ENCODE measurements at regions of chr19 and their contacts with region 1.

Region 1: GRCh38 chr19:48363810-48364563 is at the starts of genes SYNGR4 and TMEM143:
- DNase-seq: peak; percentile 99
- H3K4me3 Mint-ChIP-seq: peak within 1 kb of the TSS; percentile 88
- H3K27ac Mint-ChIP-seq: peak within 1 kb of the TSS; percentile 94
- H3K4me1 Mint-ChIP-seq: peaks cover 14% of the 10 kb centered on the region
- H3K27me3 Mint-ChIP-seq: no peaks in the 10 kb centered on the region
- total RNA-seq, gene SYNGR4: 0.21 TPM in 1 of 2 experiments, not detected in the other
- total RNA-seq, gene TMEM143: 17.1 to 17.9 TPM

Region 2: DNA sequence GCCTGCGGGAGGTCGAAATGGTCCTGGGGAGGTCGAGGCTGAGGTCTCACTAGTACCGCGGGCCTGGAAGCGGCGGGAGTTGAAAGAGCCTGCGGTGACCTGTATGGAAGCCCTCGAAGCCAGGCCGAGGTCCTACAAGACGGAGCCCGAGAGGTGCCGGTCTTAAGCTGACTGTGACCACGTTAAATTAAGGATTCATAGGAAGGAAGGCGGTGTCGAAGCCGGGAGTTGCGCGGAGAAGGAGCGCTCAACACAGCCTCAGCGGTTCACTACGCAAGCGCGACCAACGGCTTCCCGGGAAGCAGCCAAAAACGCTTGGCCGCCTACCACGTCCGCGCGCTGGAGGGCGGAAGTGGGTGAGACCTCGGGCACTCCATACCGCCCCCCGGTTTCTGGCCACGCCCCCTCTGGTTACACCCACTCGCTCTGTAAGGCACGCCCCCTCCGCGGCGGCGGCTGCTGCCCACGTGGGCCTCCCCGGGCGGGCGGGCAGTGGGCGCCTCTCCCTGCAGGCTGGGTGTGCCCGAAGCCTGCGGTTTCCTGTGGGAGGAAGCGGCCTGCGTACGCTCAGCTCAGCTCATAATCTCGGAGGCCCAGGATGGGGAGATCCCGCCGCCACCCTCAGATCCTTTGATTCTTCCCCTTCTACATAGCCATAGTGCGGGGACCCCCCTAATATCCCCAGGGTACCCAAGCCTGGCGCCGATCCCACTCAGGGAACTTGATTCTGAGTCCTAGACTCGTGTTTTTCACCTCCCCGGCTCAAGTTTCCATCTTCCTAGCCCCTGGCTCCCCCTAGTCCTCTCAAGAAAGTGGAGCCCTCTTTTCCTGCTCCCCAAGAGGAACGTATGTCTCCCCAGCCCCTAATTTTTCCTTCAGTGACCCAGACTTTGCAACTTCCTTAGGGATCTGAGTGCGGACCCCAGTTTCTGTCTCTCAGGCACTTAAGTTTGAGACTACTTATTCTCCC is 42.1 kb before region 1 on chr19:
- CTCF ChIA-PET with region 1: interaction called, 6 read pairs
- POLR2A ChIA-PET with region 1: interaction called, 3 read pairs
- intact Hi-C with region 1: loop called (anchors 1 kb)
- DNase-seq: peak; percentile 99
- H3K4me3 Mint-ChIP-seq: peak overlapping the region; percentile 88
- H3K27ac Mint-ChIP-seq: peak overlapping the region; percentile 99
- H3K4me1 Mint-ChIP-seq: peaks cover 51% of the 10 kb centered on the region
- H3K27me3 Mint-ChIP-seq: no peaks in the 10 kb centered on the region

Region 3: DNA sequence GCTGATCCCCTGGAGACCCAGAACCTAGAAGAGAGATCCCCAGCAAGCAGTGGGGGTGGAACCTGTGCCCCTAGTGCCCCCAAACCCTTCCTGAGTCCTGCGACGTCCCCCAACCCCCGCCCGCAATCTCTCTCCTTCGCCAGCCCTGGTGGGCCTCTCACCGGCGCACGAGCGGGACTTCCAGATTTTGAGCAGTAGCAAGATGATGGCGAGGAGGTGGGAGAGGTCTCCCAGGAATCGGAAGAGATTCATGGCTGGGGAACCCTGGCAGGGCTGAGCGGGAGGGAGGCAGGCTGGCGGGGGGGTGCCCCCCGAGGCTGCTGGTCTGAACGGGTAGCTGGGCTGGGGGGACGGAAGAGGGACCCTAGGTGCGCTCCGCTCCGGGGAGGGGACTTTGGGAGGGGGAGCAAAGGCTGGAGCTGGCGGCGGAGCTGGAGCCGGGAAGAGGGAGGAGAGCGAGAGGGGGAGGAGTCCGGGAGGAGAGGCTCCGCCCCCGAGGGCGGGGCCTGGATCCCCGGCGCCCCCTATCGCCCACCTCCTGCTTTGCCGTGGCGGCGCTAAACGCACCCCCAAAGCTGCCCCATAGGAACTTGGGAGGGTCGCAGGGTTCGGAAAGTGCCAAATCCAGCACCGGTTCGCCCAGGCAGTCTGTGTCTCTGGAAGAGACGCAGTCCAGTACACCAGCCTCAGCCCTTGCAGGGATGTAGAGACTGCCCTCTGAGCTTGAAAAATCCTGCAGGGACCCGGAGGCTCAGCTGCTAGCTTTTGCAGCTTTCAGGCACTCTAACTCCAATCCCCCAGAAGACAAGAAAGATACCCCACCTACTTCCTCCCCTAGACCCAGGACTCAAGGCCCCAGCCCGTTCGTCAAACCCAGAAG is 27.4 kb after region 1 on chr19 and contains the start of gene KDELR1:
- CTCF ChIA-PET with region 1: interaction called, 29 read pairs
- POLR2A ChIA-PET with region 1: interaction called, 15 read pairs
- intact Hi-C with region 1: loop called (anchors 1 kb)
- DNase-seq: peak; percentile 80
- H3K4me3 Mint-ChIP-seq: peak within 1 kb of the TSS; percentile 90
- H3K27ac Mint-ChIP-seq: peak within 1 kb of the TSS; percentile 87
- H3K4me1 Mint-ChIP-seq: peaks cover 25% of the 10 kb centered on the region
- H3K27me3 Mint-ChIP-seq: peaks cover 23% of the 10 kb centered on the region
- total RNA-seq, gene KDELR1: 82.9 to 88.1 TPM

Region 4: DNA sequence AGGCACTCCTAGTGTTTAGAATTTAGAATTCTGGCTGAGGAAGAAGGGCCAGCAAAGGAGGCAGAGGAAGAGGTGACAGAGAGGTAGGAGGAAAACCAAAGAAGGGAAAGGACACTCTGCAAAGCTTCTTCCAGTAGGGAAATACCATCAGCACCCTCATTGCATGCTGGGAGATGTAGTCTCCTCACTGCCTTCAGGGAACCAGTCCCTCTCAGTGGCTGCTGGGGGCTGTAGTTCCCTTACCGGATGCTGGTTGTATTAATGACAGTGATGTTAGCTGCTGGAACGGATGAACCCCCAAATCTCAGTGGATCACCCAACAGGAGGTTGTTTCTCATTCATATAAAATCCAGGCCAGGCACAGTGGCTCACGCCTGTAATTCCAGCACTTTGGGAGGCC is 39.6 kb after region 1 on chr19:
- CTCF ChIA-PET with region 1: no interaction called
- POLR2A ChIA-PET with region 1: no interaction called
- intact Hi-C with region 1: no loop called
- DNase-seq: peak; percentile 65
- H3K4me3 Mint-ChIP-seq: no peak overlapping the region
- H3K27ac Mint-ChIP-seq: no peak overlapping the region
- H3K4me1 Mint-ChIP-seq: peaks cover 9% of the 10 kb centered on the region
- H3K27me3 Mint-ChIP-seq: peaks cover 3% of the 10 kb centered on the region

Region 5: GRCh38 chr19:48445606-48446481 is 81.9 kb after region 1 on chr19 and contains the start of gene GRWD1:
- CTCF ChIA-PET with region 1: interaction called, 3 read pairs
- POLR2A ChIA-PET with region 1: no interaction called
- intact Hi-C with region 1: loop called (anchors 1 kb)
- DNase-seq: peak; percentile 96
- H3K4me3 Mint-ChIP-seq: peak within 1 kb of the TSS; percentile 87
- H3K27ac Mint-ChIP-seq: peak within 1 kb of the TSS; percentile 93
- H3K4me1 Mint-ChIP-seq: peaks cover 28% of the 10 kb centered on the region
- H3K27me3 Mint-ChIP-seq: peaks cover 18% of the 10 kb centered on the region
- total RNA-seq, gene GRWD1: 38.8 to 45.3 TPM

Region 6: DNA sequence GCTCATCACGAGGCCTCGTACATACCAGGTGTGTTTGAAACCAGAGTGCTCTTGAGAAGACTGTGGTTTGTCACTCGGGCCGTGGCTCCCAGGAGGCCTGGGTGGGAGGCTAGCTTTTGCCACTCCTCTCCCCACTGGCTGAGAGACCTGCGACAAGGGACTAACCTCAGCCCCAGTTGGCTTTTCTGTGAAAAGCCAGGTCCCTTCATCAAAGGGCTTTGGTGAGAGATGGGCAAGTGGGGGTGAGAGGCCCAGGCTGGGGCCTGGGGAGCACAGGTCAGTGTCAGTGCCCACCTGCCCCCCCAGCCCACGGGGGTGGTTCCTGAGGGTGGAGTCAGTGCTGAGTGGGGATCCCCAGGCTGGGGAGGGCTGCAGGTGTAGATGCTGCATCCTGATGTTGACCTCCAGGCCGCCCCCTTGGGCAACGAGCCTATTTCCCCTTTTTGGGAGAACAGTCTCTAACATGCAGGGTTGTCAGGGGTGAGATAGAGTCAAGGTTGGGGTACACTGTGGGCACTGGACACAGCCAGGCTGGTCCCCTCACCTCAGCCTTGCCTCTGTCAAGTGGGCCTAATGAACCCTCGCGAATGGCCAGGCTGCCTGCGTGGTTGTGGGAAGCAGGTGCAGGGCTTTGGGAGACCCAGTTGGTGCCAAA is 92.0 kb after region 1 on chr19:
- CTCF ChIA-PET with region 1: no interaction called
- POLR2A ChIA-PET with region 1: no interaction called
- intact Hi-C with region 1: no loop called
- DNase-seq: no peak
- H3K4me3 Mint-ChIP-seq: no peak overlapping the region
- H3K27ac Mint-ChIP-seq: no peak overlapping the region
- H3K4me1 Mint-ChIP-seq: peaks cover 7% of the 10 kb centered on the region
- H3K27me3 Mint-ChIP-seq: no peaks in the 10 kb centered on the region

Region 7: GRCh38 chr19:48618916-48619691 is 255.1 kb after region 1 on chr19 and contains the starts of genes RPL18 and SPHK2:
- CTCF ChIA-PET with region 1: no interaction called
- POLR2A ChIA-PET with region 1: interaction called, 5 read pairs
- intact Hi-C with region 1: loop called (anchors 1 kb)
- DNase-seq: peak; percentile 97
- H3K4me3 Mint-ChIP-seq: peak within 1 kb of the TSS; percentile 96
- H3K27ac Mint-ChIP-seq: peak within 1 kb of the TSS; percentile 97
- H3K4me1 Mint-ChIP-seq: peaks cover 56% of the 10 kb centered on the region
- H3K27me3 Mint-ChIP-seq: no peaks in the 10 kb centered on the region
- total RNA-seq, gene RPL18: 2,095 to 2,140 TPM
- total RNA-seq, gene SPHK2: 24.1 to 24.6 TPM

Measured in activated CD4-positive, alpha-beta memory T cell treated with anti-CD3 and anti-CD28 coated beads for 36 hours (primary cell).